B cell (primary cell): ENCODE measurements at regions of chr15 and their contacts with region 1.

Region 1: GRCh38 chr15:38647683-38648082 is 83.1 kb upstream of the RASGRP1 start:
- DNase-seq: no peak
- ATAC-seq: no peak
- H3K4me3 ChIP-seq: no peak overlapping the region
- H3K4me3 Mint-ChIP-seq: no peak overlapping the region
- H3K27ac ChIP-seq: no peak overlapping the region
- H3K27ac Mint-ChIP-seq: no peak overlapping the region
- H3K4me1 ChIP-seq: peaks cover 39 to 40% of the 10 kb centered on the region in 2 donors
- H3K4me1 Mint-ChIP-seq: peaks cover 60% of the 10 kb centered on the region
- H3K27me3 ChIP-seq: no peaks in the 10 kb centered on the region
- H3K27me3 Mint-ChIP-seq: no peaks in the 10 kb centered on the region
- CTCF ChIP-seq: no peak

Region 2: DNA sequence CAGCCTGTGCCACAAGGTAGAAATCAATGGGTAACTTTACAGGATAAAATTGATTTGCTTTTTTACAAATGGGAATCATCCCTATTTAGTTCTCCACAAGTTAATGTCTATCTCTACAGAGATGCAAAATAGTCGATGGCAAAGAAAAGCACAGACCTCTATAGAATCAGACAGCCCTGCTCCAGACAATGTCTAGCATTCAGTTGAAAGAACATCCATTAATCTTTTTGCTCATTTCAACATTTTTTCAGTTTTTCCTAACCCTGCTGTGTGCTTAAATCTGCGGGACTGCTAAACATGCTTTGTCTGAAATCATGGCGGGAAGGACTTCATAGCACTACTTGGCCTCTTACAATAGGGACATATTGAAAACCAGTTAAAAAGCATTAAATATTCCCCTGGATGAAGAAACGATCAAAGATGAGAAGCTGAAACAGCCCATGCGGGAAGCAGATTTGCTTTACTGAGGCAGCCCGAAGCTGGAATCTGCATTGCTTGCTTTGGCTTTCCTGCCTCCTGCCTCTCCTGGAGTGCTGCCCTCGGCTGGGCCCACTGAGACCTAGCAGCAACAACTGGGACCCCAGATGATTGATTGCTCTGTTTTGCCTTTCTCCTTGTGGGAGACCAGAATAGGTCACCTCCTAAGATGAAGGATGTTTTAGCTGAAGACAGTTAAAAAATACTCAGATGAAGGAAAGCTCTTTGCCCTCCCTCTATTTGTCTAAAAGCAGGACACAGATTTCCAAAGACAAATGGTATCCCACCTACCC is 44.6 kb before region 1 on chr15:
- CTCF ChIA-PET with region 1: no interaction called
- POLR2A ChIA-PET with region 1: interaction called, 5 read pairs
- intact Hi-C with region 1: loop called (anchors 5 kb)
- DNase-seq: no peak
- ATAC-seq: no peak
- H3K4me3 ChIP-seq: no peak overlapping the region
- H3K4me3 Mint-ChIP-seq: no peak overlapping the region
- H3K27ac ChIP-seq: no peak overlapping the region
- H3K27ac Mint-ChIP-seq: no peak overlapping the region
- H3K4me1 ChIP-seq: peaks cover 8 to 14% of the 10 kb centered on the region in 2 donors
- H3K4me1 Mint-ChIP-seq: peaks cover 21% of the 10 kb centered on the region
- H3K27me3 ChIP-seq: no peaks in the 10 kb centered on the region
- H3K27me3 Mint-ChIP-seq: no peaks in the 10 kb centered on the region
- CTCF ChIP-seq: no peak